Sciatic nerve (tissue), 2 donors: ENCODE measurements at regions of chr4 and their contacts with region 1.

Region 1: DNA sequence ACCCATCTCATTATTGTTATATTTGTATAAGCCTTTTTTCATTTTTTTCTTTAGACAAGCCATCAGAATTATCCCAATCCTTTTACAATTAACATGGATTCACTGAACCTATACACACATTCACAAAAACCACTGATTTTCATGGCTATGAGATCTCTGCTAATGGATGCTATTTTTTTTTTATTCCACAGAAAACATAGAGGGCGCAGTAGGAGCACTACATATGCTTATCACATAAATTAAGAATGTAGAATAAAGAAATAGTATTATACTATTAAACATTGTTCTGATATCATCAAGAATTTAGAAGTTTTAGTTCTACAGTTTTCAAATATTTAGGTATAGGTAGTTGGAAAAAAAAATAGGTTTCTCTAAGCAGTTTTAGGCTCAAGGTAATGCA is 1477.4 kb downstream of the ARAP2 start:
- DNase-seq: no peak
- ATAC-seq: no peak

Region 2: DNA sequence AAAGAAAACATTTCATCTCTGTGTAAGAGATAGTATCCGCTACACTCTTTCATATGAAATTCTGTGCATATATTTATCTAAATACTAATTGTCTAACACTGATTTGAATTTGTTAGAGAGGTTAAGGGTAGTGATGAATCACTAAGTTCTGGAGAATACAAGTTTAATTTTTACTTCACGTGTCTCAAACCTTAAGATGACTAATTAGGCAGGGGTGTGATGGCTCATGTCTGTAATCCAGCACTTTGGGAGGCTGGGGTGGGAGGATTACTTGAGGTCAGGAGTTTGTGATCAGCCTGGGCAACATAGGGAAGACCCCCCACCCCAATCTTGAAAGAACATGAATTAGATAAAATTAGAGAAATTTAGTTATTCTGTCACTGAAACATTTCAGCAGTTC is 1804.8 kb before region 1 on chr4:
- intact Hi-C with region 1: no loop called
- DNase-seq: no peak
- ATAC-seq: no peak

Region 3: DNA sequence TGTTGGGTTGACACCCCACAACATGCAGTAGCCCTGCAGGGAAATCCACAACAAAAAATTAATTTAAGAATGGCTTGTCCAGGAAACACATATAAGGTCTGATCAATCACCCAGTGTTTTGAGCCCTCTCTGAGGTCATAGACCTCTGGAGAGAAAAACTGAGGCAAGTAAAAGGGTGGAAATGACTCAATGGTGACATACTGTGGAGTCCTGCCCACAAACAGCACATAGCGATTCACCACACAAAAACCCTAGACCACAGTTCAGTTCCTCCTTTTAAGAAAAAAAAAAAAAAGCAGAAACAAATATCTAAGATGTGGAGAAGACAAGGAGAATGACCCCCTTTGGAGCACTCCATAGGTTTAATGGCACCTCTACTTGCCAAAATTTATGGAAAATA is 1355.8 kb before region 1 on chr4:
- intact Hi-C with region 1: loop called (anchors 10 kb)
- DNase-seq: no peak
- ATAC-seq: no peak

Region 4: DNA sequence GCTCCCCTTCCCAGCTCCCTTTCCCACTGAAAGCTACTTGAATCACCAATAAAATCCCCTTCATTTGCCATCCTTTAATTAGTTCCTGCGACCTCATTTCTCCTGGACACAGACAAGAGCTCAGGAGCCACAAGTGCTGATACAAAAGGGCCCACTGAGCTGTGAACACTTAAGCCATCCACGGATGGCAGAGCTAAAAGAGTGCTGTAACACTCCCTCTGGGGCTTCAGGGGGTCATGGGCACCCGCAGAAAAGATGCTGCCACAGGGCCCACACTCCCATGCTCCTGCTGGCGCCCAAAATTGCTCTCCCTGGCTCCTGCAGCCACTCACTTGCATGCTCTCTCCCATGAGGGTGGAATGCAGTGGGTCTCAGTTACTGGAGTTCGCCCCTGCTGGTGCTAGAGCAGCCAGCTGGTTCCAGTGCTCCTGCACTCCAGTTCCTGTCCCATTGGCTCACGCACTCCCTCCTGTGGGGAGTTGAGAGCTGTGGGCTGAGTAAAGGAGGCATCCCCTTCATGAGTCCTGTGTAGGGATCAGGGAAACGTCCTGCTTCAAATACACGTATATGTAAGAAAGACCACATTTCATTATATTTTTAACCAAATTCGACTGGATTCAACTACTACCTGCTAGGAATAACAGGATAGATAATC is 186.3 kb after region 1 on chr4:
- intact Hi-C with region 1: no loop called
- DNase-seq: no peak
- ATAC-seq: no peak

Region 5: DNA sequence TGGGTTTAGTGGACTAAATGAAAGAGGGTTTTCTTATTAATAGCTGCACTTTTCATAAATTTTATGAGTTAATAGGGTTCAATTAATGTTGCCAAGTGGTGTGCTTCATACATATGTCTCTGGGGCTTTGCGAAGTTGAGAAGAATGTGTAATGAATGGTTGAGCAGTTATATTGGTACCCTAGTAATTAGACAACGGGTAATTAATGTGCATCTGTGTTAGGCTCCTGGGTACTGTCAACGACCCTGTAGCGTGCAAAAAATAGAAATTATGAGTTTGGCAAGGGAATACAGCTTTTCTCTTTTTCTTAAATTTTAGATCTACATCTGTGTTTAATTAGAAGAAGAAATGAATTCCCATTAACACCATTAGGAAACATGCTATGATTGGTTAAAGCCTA is 449.7 kb after region 1 on chr4:
- intact Hi-C with region 1: no loop called
- DNase-seq: no peak
- ATAC-seq: no peak

Region 6: GRCh38 chr4:36244257-36245079 is 1477.5 kb after region 1 on chr4 and contains the start of gene ARAP2:
- intact Hi-C with region 1: no loop called
- DNase-seq: peak; percentile 71
- ATAC-seq: peak; percentile 64
- total RNA-seq, gene ARAP2: 26.0 TPM